CD8-positive, alpha-beta T cell (primary cell): ENCODE measurements at regions of chr6 and their contacts with region 1.

Region 1: DNA sequence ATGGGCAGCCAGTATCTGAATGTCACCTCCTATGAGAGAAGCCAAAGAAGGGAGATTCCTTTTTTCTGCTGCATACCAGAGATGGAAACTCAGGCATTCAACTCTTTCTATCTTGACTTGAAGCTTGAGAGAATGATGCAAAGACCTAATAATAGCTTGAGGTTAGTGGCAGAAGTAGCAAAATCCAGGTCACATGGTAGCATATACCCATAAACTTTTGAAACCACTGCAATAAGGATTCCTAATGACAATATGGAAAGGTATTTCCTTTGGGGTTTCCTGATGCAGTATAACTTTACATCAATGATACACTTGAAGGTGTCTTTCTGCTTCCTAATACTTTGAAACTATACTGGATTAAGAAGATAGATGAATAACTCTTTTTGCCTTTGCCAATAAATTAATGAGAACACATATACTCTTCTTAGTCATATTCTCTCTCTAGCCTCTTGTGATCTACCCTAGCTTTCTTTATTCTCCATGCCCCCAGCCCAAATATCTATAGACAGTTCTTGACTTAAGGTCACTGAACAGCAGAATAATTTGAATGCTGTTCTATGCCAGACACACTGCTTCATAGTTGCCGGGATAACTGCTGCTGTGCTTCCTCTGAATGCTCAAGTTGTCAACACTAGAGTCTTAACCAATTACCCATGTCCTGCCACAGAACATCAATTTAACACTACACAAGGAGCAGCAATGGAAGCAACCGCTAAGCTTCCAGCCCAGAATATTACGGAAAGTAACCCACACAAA is 155.5 kb upstream of the SIM1 start:
- DNase-seq: no peak
- ATAC-seq: no peak
- H3K4me3 ChIP-seq: no peak overlapping the region
- H3K4me3 Mint-ChIP-seq: no peak overlapping the region
- H3K27ac ChIP-seq: no peak overlapping the region
- H3K27ac Mint-ChIP-seq: no peak overlapping the region
- H3K4me1 ChIP-seq: no peaks in the 10 kb centered on the region
- H3K4me1 Mint-ChIP-seq: no peaks in the 10 kb centered on the region
- H3K27me3 ChIP-seq: no peaks in the 10 kb centered on the region
- H3K27me3 Mint-ChIP-seq: no peaks in the 10 kb centered on the region
- CTCF ChIP-seq: no peak

Region 2: GRCh38 chr6:98716341-98716740 is 1903.9 kb before region 1 on chr6:
- CTCF ChIA-PET with region 1: no interaction called
- POLR2A ChIA-PET with region 1: no interaction called
- intact Hi-C with region 1: loop called in 1 of 2 experiments (anchors 10 kb)
- DNase-seq: no peak
- ATAC-seq: no peak
- H3K4me3 ChIP-seq: no peak overlapping the region
- H3K4me3 Mint-ChIP-seq: no peak overlapping the region
- H3K27ac ChIP-seq: no peak overlapping the region
- H3K27ac Mint-ChIP-seq: no peak overlapping the region
- H3K4me1 ChIP-seq: no peaks in the 10 kb centered on the region
- H3K4me1 Mint-ChIP-seq: no peaks in the 10 kb centered on the region
- H3K27me3 ChIP-seq: no peaks in the 10 kb centered on the region
- H3K27me3 Mint-ChIP-seq: peaks cover 12% of the 10 kb centered on the region
- CTCF ChIP-seq: no peak

Region 3: GRCh38 chr6:99822741-99823512 is 797.3 kb before region 1 on chr6:
- CTCF ChIA-PET with region 1: no interaction called
- POLR2A ChIA-PET with region 1: no interaction called
- intact Hi-C with region 1: no loop called
- DNase-seq: peak in 2 of 9 experiments; percentile 43 to 53
- ATAC-seq: peak; percentile 34
- H3K4me3 ChIP-seq: no peak overlapping the region
- H3K4me3 Mint-ChIP-seq: peak overlapping the region; percentile 50
- H3K27ac ChIP-seq: no peak overlapping the region
- H3K27ac Mint-ChIP-seq: no peak overlapping the region
- H3K4me1 ChIP-seq: no peaks in the 10 kb centered on the region
- H3K4me1 Mint-ChIP-seq: peaks cover 7% of the 10 kb centered on the region
- H3K27me3 ChIP-seq: peaks cover 4% of the 10 kb centered on the region in 2 experiments
- H3K27me3 Mint-ChIP-seq: peaks cover 31% of the 10 kb centered on the region
- CTCF ChIP-seq: no peak